Activated T-helper 1 cell treated with anti-CD3 and anti-CD28 coated beads, Interleukin-12 subunit alpha, Interleukin-12 subunit beta, Interleukin-2, Interleukin-4 antibody, amounts not matched to agents 30 ng/mL and 10 ng/mL and 1 ng/mL, durations not matched to agents 14 hours and 24 hours and 36 hours (primary cell): ENCODE measurements at regions of chr3 and their contacts with region 1.

Region 1: GRCh38 chr3:47164007-47164881 is at the start of gene SETD2:
- DNase-seq: peak; percentile 75
- H3K4me3 Mint-ChIP-seq: peak within 1 kb of the TSS; percentile 99
- H3K27ac Mint-ChIP-seq: peak within 1 kb of the TSS; percentile 100
- H3K4me1 Mint-ChIP-seq: peaks cover 53% of the 10 kb centered on the region
- H3K27me3 Mint-ChIP-seq: peaks cover 2% of the 10 kb centered on the region
- total RNA-seq, gene SETD2: 41.2 and 45.7 TPM in 2 replicates

Region 2: GRCh38 chr3:47057212-47057671 is 107.0 kb before region 1 on chr3:
- intact Hi-C with region 1: loop called (anchors 2 kb)
- DNase-seq: peak; percentile 37
- H3K4me3 Mint-ChIP-seq: no peak overlapping the region
- H3K27ac Mint-ChIP-seq: peak overlapping the region; percentile 55
- H3K4me1 Mint-ChIP-seq: peaks cover 41% of the 10 kb centered on the region
- H3K27me3 Mint-ChIP-seq: no peaks in the 10 kb centered on the region

Region 3: GRCh38 chr3:47121409-47121808 is 42.8 kb before region 1 on chr3:
- intact Hi-C with region 1: loop called (anchors 2 kb)
- DNase-seq: no peak
- H3K4me3 Mint-ChIP-seq: no peak overlapping the region
- H3K27ac Mint-ChIP-seq: peak overlapping the region; percentile 35
- H3K4me1 Mint-ChIP-seq: peaks cover 54% of the 10 kb centered on the region
- H3K27me3 Mint-ChIP-seq: no peaks in the 10 kb centered on the region

Region 4: GRCh38 chr3:47225310-47225906 is 61.2 kb after region 1 on chr3:
- intact Hi-C with region 1: no loop called
- DNase-seq: no peak
- H3K4me3 Mint-ChIP-seq: no peak overlapping the region
- H3K27ac Mint-ChIP-seq: no peak overlapping the region
- H3K4me1 Mint-ChIP-seq: no peaks in the 10 kb centered on the region
- H3K27me3 Mint-ChIP-seq: no peaks in the 10 kb centered on the region

Region 5: DNA sequence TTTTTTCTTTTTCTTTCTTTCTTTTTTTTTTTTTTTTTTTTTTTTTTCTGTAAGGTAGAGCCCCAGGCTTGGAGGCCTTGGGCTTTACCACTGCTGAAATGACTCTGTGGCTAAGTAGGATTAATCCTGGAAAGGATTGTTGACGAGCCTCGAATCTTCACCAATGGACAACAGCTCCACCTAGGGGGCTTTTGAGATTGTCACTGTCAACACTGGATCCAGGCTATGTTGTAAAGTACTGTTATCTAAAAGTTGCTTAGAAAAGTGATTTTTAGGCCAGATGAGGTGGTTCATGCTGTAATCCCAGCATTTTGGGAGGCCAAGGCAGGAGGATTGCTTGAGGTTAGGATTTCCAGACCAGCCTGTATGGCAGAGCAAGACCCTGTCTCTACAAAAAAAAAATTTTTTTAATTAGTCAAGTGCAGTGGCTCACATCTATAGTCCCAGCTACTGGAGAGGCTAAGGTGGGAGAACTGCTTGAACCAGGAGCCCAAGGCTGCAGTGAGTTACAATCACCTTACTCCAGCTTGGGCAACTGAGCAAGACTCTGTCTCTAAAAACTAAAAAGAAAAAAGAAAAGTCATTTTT is 160.1 kb after region 1 on chr3:
- intact Hi-C with region 1: loop called (anchors 5 kb)
- DNase-seq: peak; percentile 23
- H3K4me3 Mint-ChIP-seq: no peak overlapping the region
- H3K27ac Mint-ChIP-seq: no peak overlapping the region
- H3K4me1 Mint-ChIP-seq: no peaks in the 10 kb centered on the region
- H3K27me3 Mint-ChIP-seq: no peaks in the 10 kb centered on the region